ENCODE measurements at regions of chr21 and their contacts with region 1.

Region 1: DNA sequence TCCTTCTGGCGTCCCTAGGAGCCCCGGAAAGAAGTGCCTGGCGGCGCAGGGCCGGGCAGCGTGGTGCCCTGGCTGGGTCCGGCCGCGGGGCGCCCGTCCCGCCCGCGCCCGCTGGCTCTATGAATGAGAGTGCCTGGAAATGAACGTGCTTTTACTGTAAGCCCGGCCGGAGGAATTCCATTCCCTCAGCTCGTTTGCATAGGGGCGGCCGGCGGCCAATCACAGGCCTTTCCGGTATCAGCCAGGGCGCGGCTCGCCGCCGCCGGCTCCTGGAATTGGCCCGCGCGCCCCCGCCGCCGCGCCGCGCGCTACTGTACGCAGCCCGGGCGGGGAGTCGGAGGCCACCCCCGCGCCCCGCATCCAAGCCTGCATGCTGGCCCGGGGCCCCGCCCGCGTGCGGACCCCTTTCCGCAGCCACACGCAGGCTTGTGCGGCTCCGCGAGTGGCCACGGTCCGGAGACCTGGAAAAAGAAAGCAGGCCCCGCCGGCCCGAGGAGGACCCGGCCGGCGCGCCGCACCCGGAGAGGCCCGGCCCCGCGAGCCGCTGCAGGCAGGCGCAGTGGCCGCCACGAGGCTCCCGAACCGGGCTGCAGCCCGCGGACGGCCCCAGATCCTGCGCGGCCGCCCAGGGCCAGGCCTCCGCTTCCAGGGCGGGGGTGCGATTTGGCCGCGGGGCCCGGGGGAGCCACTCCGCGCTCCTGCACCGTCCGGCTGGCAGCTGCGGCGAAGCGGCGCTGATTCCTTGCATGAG is 160.4 kb downstream of the RUNX1 start:
- DNase-seq: peak; percentile 90 to 98 (median 95)
- ATAC-seq: peak; percentile 75
- H3K4me3 ChIP-seq: peak overlapping the region; percentile 68
- H3K27ac ChIP-seq: peak overlapping the region; percentile 94
- H3K4me1 ChIP-seq: peaks cover 16 to 40% of the 10 kb centered on the region in 2 experiments
- H3K27me3 ChIP-seq: no peaks in the 10 kb centered on the region
- CTCF ChIP-seq: no peak; a peak in 1 of 6 replicates
- EP300 ChIP-seq: 0 out of 2 replicates have a peak, but pooled peaks have one; percentile 12
- POLR2A ChIP-seq: peak; percentile 96
- RAD21 ChIP-seq: no peak

Region 2: GRCh38 chr21:34874684-34875513 is 13.8 kb before region 1 on chr21:
- CTCF ChIA-PET with region 1: no interaction called
- POLR2A ChIA-PET with region 1: interaction called, 42 read pairs
- in situ Hi-C with region 1: no loop called
- intact Hi-C with region 1: no loop called
- DNase-seq: no peak
- ATAC-seq: no peak
- H3K4me3 ChIP-seq: no peak overlapping the region
- H3K27ac ChIP-seq: no peak overlapping the region
- H3K4me1 ChIP-seq: no peaks in the 10 kb centered on the region
- H3K27me3 ChIP-seq: no peaks in the 10 kb centered on the region
- CTCF ChIP-seq: no peak
- EP300 ChIP-seq: no peak
- POLR2A ChIP-seq: no peak
- RAD21 ChIP-seq: no peak

Region 3: DNA sequence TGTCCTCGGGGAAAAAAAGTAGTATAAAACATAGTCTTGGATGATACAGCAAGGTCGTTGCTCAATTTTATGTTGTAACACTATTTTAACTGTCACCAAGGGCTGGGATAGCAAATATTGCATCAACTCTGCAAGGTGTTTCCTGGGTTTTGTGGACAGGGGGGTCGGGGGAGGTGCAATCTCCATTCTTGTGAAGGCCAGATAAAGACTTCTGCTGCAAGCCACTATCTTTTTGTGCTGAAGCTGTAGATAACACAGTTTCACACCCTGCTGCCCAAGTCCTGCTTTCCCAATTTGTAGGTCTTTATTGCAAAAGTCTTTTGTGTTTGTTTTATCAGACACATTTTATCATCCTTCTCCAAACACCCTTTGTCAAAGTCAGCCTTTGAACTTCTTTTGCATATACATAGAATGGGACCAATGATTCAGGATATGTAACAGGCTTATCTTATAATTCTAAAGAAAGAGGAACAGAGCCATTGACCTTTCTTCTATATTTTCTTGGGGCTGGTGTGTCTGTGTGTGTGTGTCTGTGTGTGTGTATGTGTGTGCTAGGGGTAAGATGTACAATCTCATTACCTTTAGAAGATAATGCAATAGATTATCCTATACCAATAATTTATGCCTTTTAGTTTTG is 19.8 kb after region 1 on chr21:
- CTCF ChIA-PET with region 1: no interaction called
- POLR2A ChIA-PET with region 1: interaction called, 54 read pairs
- in situ Hi-C with region 1: no loop called
- intact Hi-C with region 1: loop called (anchors 1 kb)
- DNase-seq: peak; percentile 92 to 98 (median 93)
- ATAC-seq: peak; percentile 79
- H3K4me3 ChIP-seq: no peak overlapping the region
- H3K27ac ChIP-seq: peak overlapping the region; percentile 86
- H3K4me1 ChIP-seq: peaks cover 37 to 75% of the 10 kb centered on the region in 2 experiments
- H3K27me3 ChIP-seq: no peaks in the 10 kb centered on the region
- CTCF ChIP-seq: no peak
- EP300 ChIP-seq: peak; percentile 100
- POLR2A ChIP-seq: no peak
- RAD21 ChIP-seq: peak; percentile 46 to 49

Region 4: DNA sequence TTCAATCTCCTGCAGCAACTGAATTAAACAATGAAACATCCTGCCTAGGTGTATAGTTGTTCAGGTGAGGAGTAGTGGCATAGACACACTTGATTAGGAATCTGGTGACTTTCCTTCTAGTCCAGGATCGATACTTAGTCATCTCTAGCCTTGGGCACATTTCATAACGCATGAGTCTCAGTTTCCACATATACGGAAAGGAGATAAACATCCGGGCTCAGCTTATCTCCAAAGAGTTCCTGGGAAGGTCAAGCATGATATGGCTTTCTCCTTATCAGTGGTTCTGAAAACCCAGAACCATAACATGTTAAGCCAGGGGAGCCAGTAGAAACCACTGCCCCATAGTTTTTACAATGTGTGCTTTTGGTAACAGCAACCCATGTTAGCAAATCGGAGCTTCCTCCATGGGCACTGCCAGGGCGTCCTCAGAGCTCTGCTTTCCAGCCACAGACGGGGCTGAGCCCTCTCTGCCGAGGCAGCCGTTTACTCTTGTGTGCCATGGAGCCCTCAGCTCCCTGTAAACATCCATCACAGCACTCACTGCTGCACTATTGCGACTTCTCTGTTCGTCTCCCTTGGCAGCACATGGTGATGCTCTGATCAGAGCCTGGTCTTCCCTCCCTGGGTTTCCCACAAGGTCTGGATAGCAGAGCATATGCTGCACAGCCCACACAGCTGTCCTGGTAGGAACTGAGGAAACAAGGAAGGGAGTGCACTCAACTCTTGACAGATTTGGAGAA is 125.7 kb after region 1 on chr21:
- CTCF ChIA-PET with region 1: no interaction called
- POLR2A ChIA-PET with region 1: interaction called, 11 read pairs
- in situ Hi-C with region 1: no loop called
- intact Hi-C with region 1: no loop called
- DNase-seq: peak in 1 of 4 experiments; percentile 34
- ATAC-seq: peak; percentile 15
- H3K4me3 ChIP-seq: no peak overlapping the region
- H3K27ac ChIP-seq: no peak overlapping the region
- H3K4me1 ChIP-seq: peaks cover 6 to 32% of the 10 kb centered on the region in 2 experiments
- H3K27me3 ChIP-seq: no peaks in the 10 kb centered on the region; a peak in 1 of 5 replicates
- CTCF ChIP-seq: no peak
- EP300 ChIP-seq: peak; percentile 89
- POLR2A ChIP-seq: no peak
- RAD21 ChIP-seq: no peak

Region 5: GRCh38 chr21:35051287-35051818 is 162.6 kb after region 1 on chr21:
- CTCF ChIA-PET with region 1: no interaction called
- POLR2A ChIA-PET with region 1: interaction called, 12 read pairs
- in situ Hi-C with region 1: no loop called
- intact Hi-C with region 1: loop called (anchors 5 kb)
- DNase-seq: peak; percentile 82 to 95 (median 88)
- ATAC-seq: peak; percentile 98
- H3K4me3 ChIP-seq: no peak overlapping the region
- H3K27ac ChIP-seq: peak overlapping the region; percentile 70
- H3K4me1 ChIP-seq: peaks cover 18 to 50% of the 10 kb centered on the region in 2 experiments
- H3K27me3 ChIP-seq: no peaks in the 10 kb centered on the region
- CTCF ChIP-seq: peak; percentile 87 to 90 (median 87)
- EP300 ChIP-seq: peak; percentile 55; the same call in 1 of the 2 replicates
- POLR2A ChIP-seq: 0 out of 2 replicates have a peak, but pooled peaks have one; percentile 45
- RAD21 ChIP-seq: peak; percentile 94 to 95

Region 6: DNA sequence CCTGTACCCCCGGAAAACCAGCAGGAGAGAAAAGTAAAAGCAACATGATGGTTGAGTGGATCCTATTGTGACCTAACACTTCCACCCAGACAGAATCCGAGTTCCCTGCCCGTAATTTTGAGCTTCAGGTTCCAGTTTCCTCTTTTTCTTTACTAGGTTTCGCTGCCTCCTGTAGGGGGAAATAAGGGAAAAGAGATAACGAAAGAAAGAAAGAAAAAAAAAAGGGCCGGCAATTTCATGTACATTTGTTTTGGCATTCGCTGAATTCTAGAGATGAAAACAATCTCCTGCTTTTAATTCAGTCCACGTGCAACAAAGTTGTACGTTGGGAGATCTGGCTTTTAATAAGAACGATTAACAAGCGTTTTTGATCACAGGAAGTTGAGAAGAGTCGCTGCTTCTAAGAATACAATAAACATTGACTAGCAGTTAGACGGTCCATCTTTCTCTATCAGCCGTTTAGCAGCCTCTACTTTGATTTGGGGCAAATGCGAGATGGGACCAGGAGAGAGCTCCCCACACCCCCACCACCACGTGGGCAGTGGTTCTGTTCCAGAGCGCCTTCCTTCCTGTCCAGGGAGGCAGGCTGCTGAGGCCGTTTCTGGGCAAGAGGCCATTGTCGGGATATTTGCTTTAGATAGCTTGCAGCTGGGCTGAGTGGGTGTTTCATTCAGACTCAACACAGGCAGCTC is 316.3 kb after region 1 on chr21:
- CTCF ChIA-PET with region 1: no interaction called
- POLR2A ChIA-PET with region 1: interaction called, 7 read pairs
- in situ Hi-C with region 1: no loop called
- intact Hi-C with region 1: loop called (anchors 1 kb)
- DNase-seq: peak; percentile 69 to 85 (median 73)
- ATAC-seq: peak; percentile 75
- H3K4me3 ChIP-seq: peak overlapping the region; percentile 18
- H3K27ac ChIP-seq: peak overlapping the region; percentile 85
- H3K4me1 ChIP-seq: peaks cover 24 to 48% of the 10 kb centered on the region in 2 experiments
- H3K27me3 ChIP-seq: no peaks in the 10 kb centered on the region
- CTCF ChIP-seq: peak; percentile 26 to 52 (median 42); a peak in 4 of 6 replicates
- EP300 ChIP-seq: no peak; the same call in 1 of the 2 replicates
- POLR2A ChIP-seq: no peak; the same call in 1 of the 2 replicates
- RAD21 ChIP-seq: peak; percentile 56 to 62

Region 7: GRCh38 chr21:35508139-35508888 is 619.6 kb after region 1 on chr21:
- CTCF ChIA-PET with region 1: no interaction called
- POLR2A ChIA-PET with region 1: interaction called, 10 read pairs
- in situ Hi-C with region 1: no loop called
- intact Hi-C with region 1: loop called (anchors 1 kb)
- DNase-seq: peak; percentile 35 to 84 (median 51)
- ATAC-seq: peak; percentile 96
- H3K4me3 ChIP-seq: no peak overlapping the region
- H3K27ac ChIP-seq: no peak overlapping the region
- H3K4me1 ChIP-seq: peaks cover 3 to 43% of the 10 kb centered on the region in 2 experiments; a peak in 4 of 5 replicates
- H3K27me3 ChIP-seq: no peaks in the 10 kb centered on the region; a peak in 1 of 5 replicates
- CTCF ChIP-seq: peak; percentile 76 to 86 (median 81)
- EP300 ChIP-seq: peak; percentile 58
- POLR2A ChIP-seq: no peak
- RAD21 ChIP-seq: peak; percentile 97

Measured in K562 (cell line).